ENCODE measurements at regions of chr1 and their contacts with region 1.

Region 1: GRCh38 chr1:86704458-86704971 is at the start of gene SH3GLB1:
- DNase-seq: peak; percentile 91 to 93 (median 92)
- H3K4me3 ChIP-seq: peak within 1 kb of the TSS; percentile 60 to 93
- H3K4me3 Mint-ChIP-seq: peak within 1 kb of the TSS; percentile 95 to 99 (median 98)
- H3K27ac ChIP-seq: peak within 1 kb of the TSS; percentile 94
- H3K27ac Mint-ChIP-seq: peak within 1 kb of the TSS; percentile 91 to 99 (median 98)
- H3K4me1 ChIP-seq: peaks cover 50% of the 10 kb centered on the region
- H3K4me1 Mint-ChIP-seq: peaks cover 32 to 66% (median 44%) of the 10 kb centered on the region in 4 donors
- H3K27me3 ChIP-seq: no peaks in the 10 kb centered on the region
- H3K27me3 Mint-ChIP-seq: peaks cover 0 to 3% of the 10 kb centered on the region in 2 donors
- total RNA-seq, gene SH3GLB1: 55.4 to 59.6 TPM

Region 2: DNA sequence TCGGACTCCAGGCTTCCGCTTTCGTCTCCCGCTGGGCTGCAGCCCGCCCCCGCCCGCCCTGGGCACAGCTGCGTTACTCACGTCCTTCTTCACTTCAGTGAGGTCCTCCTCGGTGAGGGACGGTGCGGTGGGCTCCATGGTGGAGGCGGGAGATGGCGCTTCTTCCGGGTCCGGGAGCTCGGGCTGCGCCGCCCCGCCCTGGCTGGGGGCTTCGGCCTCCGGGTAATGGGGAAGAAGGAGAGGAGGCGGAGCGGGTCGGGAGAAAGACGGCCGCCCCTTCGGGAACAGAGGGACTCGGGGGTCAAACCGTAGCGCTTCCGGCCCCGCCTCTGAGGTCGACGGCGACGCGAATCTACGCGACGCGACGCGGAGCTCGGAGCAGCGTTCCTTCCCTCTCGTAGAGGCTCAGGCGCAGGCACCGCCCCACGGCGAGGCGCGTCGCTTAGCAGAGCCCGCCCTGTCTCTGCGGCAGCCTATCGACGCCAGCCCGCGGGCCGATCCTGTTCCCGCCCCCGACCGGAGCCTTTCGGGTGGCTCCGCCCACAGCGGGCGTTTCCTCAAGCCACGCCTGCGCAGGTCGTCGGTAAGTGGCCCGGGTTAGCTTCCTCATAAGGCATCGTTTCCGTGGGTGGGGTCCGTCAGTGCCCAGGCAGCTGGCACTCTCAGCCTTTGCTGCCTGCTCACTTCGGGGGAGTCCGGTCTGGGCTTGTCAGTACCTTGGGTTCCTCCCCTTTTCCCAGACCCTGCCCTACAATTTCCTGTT is 1428.1 kb before region 1 on chr1 and contains the start of gene BCL10:
- CTCF ChIA-PET with region 1: no interaction called
- POLR2A ChIA-PET with region 1: no interaction called
- intact Hi-C with region 1: loop called (anchors 10 kb)
- DNase-seq: peak; percentile 96 to 98 (median 97)
- H3K4me3 ChIP-seq: peak within 1 kb of the TSS; percentile 75 to 94
- H3K4me3 Mint-ChIP-seq: peak within 1 kb of the TSS; percentile 88 to 93 (median 92)
- H3K27ac ChIP-seq: peak within 1 kb of the TSS; percentile 94
- H3K27ac Mint-ChIP-seq: peak within 1 kb of the TSS; percentile 94 to 97 (median 96)
- H3K4me1 ChIP-seq: peaks cover 55% of the 10 kb centered on the region
- H3K4me1 Mint-ChIP-seq: peaks cover 42 to 62% (median 53%) of the 10 kb centered on the region in 4 donors
- H3K27me3 ChIP-seq: no peaks in the 10 kb centered on the region
- H3K27me3 Mint-ChIP-seq: no peaks in the 10 kb centered on the region
- total RNA-seq, gene BCL10: 36.1 to 37.0 TPM

Region 3: GRCh38 chr1:86395771-86396497 is 308.6 kb before region 1 on chr1 and contains the start of gene ODF2L:
- CTCF ChIA-PET with region 1: interaction called, 13 read pairs
- POLR2A ChIA-PET with region 1: interaction called, 54 read pairs
- intact Hi-C with region 1: loop called (anchors 1 kb)
- DNase-seq: peak; percentile 90 to 94 (median 92)
- H3K4me3 ChIP-seq: peak within 1 kb of the TSS; percentile 77 to 87
- H3K4me3 Mint-ChIP-seq: peak within 1 kb of the TSS; percentile 94 to 99 (median 98)
- H3K27ac ChIP-seq: peak within 1 kb of the TSS; percentile 92
- H3K27ac Mint-ChIP-seq: peak within 1 kb of the TSS; percentile 97 to 100 (median 99)
- H3K4me1 ChIP-seq: peaks cover 56% of the 10 kb centered on the region
- H3K4me1 Mint-ChIP-seq: peaks cover 43 to 68% (median 51%) of the 10 kb centered on the region in 4 donors
- H3K27me3 ChIP-seq: no peaks in the 10 kb centered on the region
- H3K27me3 Mint-ChIP-seq: no peaks in the 10 kb centered on the region
- total RNA-seq, gene ODF2L: 97.3 to 98.3 TPM

Region 4: DNA sequence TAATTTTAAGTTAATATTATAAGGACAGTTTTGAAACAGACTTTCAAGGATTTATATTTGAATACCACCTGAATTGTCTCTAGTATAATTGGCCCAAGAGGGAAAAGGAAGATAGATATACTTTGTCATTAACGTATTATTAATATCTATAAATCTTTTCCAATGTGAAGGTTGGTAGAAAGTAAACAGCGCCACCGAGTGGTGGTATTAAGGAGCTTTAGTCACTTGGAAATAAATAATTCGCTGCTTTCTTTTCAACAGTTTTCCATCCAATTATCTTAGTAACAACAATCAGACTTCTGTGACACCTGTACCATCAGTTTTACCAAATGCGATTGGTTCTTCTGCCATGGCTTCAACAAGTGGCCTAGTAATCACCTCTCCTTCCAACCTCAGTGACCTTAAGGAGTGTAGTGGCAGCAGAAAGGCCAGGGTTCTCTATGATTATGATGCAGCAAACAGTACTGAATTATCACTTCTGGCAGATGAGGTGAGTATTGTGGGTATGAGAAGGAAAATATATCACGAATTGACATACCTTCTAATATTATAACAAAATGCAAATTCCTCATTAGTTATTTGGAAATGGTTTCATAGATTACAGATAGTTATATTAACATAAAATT is 37.5 kb after region 1 on chr1:
- CTCF ChIA-PET with region 1: interaction called, 31 read pairs
- POLR2A ChIA-PET with region 1: interaction called, 45 read pairs
- intact Hi-C with region 1: loop called (anchors 1 kb)
- DNase-seq: peak; percentile 11 to 55 (median 40)
- H3K4me3 ChIP-seq: no peak overlapping the region
- H3K4me3 Mint-ChIP-seq: no peak overlapping the region
- H3K27ac ChIP-seq: no peak overlapping the region
- H3K27ac Mint-ChIP-seq: no peak overlapping the region
- H3K4me1 ChIP-seq: peaks cover 24% of the 10 kb centered on the region
- H3K4me1 Mint-ChIP-seq: peaks cover 2 to 4% (median 4%) of the 10 kb centered on the region in 4 donors
- H3K27me3 ChIP-seq: no peaks in the 10 kb centered on the region
- H3K27me3 Mint-ChIP-seq: no peaks in the 10 kb centered on the region

Region 5: GRCh38 chr1:86833461-86834215 is 129.1 kb after region 1 on chr1:
- CTCF ChIA-PET with region 1: no interaction called
- POLR2A ChIA-PET with region 1: no interaction called
- intact Hi-C with region 1: loop called (anchors 1 kb)
- DNase-seq: peak; percentile 51 to 61 (median 58)
- H3K4me3 ChIP-seq: no peak overlapping the region
- H3K4me3 Mint-ChIP-seq: no peak overlapping the region
- H3K27ac ChIP-seq: no peak overlapping the region
- H3K27ac Mint-ChIP-seq: peak overlapping the region in 2 of 7 donors; percentile 4 to 35
- H3K4me1 ChIP-seq: peaks cover 5% of the 10 kb centered on the region
- H3K4me1 Mint-ChIP-seq: peaks cover 0 to 5% (median 2%) of the 10 kb centered on the region in 4 donors
- H3K27me3 ChIP-seq: no peaks in the 10 kb centered on the region
- H3K27me3 Mint-ChIP-seq: peaks cover 4 to 5% of the 10 kb centered on the region in 2 donors

Region 6: DNA sequence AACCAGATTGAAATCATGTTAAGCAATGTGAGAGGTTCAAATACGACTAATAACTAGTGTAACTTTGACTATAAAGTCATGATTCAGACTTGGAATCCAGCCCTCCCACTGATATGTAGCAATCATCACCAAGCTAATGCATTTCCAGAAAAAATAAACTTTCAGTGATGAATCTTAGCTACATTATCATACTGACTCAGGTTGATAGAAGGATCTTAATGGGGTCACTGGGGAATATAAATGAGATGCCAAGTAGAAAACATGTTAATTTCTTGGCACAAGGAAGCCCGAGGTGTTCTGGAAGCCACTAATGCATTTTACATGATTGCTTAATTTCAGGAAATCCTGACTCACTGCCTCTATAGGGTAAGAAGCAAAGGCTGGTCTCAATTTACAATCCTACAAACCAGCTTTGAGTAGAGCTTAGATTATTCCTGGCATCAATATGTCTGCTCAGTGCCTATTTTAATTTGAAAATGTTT is 141.7 kb after region 1 on chr1:
- CTCF ChIA-PET with region 1: no interaction called
- POLR2A ChIA-PET with region 1: no interaction called
- intact Hi-C with region 1: no loop called
- DNase-seq: no peak
- H3K4me3 ChIP-seq: no peak overlapping the region
- H3K4me3 Mint-ChIP-seq: no peak overlapping the region
- H3K27ac ChIP-seq: no peak overlapping the region
- H3K27ac Mint-ChIP-seq: no peak overlapping the region
- H3K4me1 ChIP-seq: no peaks in the 10 kb centered on the region
- H3K4me1 Mint-ChIP-seq: no peaks in the 10 kb centered on the region
- H3K27me3 ChIP-seq: no peaks in the 10 kb centered on the region
- H3K27me3 Mint-ChIP-seq: peaks cover 0 to 2% of the 10 kb centered on the region in 2 donors

Region 7: GRCh38 chr1:86866665-86867064 is 162.2 kb after region 1 on chr1:
- CTCF ChIA-PET with region 1: no interaction called
- POLR2A ChIA-PET with region 1: no interaction called
- intact Hi-C with region 1: no loop called
- DNase-seq: no peak
- H3K4me3 ChIP-seq: no peak overlapping the region
- H3K4me3 Mint-ChIP-seq: no peak overlapping the region
- H3K27ac ChIP-seq: no peak overlapping the region
- H3K27ac Mint-ChIP-seq: peak overlapping the region in 2 of 7 donors; percentile 21 to 82
- H3K4me1 ChIP-seq: no peaks in the 10 kb centered on the region
- H3K4me1 Mint-ChIP-seq: peaks cover 10 to 22% (median 17%) of the 10 kb centered on the region in 4 donors
- H3K27me3 ChIP-seq: no peaks in the 10 kb centered on the region
- H3K27me3 Mint-ChIP-seq: no peaks in the 10 kb centered on the region

Region 8: DNA sequence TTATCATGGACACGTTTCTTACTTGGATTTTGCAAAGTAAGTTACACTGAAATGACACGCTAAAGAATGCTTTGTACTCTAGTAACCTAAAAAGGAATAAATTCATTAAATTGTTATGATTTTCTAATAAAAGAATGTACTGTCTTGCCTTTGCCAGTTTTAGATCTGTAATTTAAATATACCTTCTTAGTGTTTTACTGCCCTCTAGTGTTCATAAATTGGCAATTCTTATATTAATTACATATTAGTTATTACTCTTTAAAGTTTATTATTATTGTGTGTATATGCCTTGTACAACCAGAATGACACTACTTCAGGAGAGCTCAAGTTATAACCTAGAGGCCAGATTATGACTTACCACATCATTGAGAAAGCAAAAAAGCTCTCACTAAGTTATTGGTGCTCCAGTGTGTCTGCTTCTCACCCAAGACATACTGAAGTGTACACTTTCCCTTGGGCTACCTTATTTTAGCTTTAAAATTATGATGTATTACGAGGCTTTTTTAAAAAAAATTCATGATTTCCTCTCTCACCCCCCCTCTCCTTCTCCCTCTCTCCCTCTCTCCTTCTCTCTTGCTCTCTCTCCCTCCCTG is 379.8 kb after region 1 on chr1:
- CTCF ChIA-PET with region 1: interaction called, 15 read pairs
- POLR2A ChIA-PET with region 1: no interaction called
- intact Hi-C with region 1: no loop called
- DNase-seq: peak in 4 of 5 donors; percentile 43 to 46 (median 44)
- H3K4me3 ChIP-seq: no peak overlapping the region
- H3K4me3 Mint-ChIP-seq: no peak overlapping the region
- H3K27ac ChIP-seq: no peak overlapping the region
- H3K27ac Mint-ChIP-seq: no peak overlapping the region
- H3K4me1 ChIP-seq: no peaks in the 10 kb centered on the region
- H3K4me1 Mint-ChIP-seq: peaks cover 0 to 3% (median 1%) of the 10 kb centered on the region in 4 donors
- H3K27me3 ChIP-seq: no peaks in the 10 kb centered on the region
- H3K27me3 Mint-ChIP-seq: no peaks in the 10 kb centered on the region

Region 9: GRCh38 chr1:87362834-87363426 is 658.4 kb after region 1 on chr1:
- CTCF ChIA-PET with region 1: no interaction called
- POLR2A ChIA-PET with region 1: no interaction called
- intact Hi-C with region 1: no loop called
- DNase-seq: no peak
- H3K4me3 ChIP-seq: no peak overlapping the region
- H3K4me3 Mint-ChIP-seq: no peak overlapping the region
- H3K27ac ChIP-seq: no peak overlapping the region
- H3K27ac Mint-ChIP-seq: no peak overlapping the region
- H3K4me1 ChIP-seq: no peaks in the 10 kb centered on the region
- H3K4me1 Mint-ChIP-seq: peaks cover 0 to 5% (median 0%) of the 10 kb centered on the region in 4 donors
- H3K27me3 ChIP-seq: no peaks in the 10 kb centered on the region
- H3K27me3 Mint-ChIP-seq: no peaks in the 10 kb centered on the region

Region 10: GRCh38 chr1:88683541-88684481 is 1979.3 kb after region 1 on chr1 and contains the start of gene PKN2:
- CTCF ChIA-PET with region 1: no interaction called
- POLR2A ChIA-PET with region 1: interaction called, 11 read pairs
- intact Hi-C with region 1: loop called (anchors 10 kb)
- DNase-seq: peak; percentile 97 to 98 (median 98)
- H3K4me3 ChIP-seq: peak within 1 kb of the TSS; percentile 43 to 82
- H3K4me3 Mint-ChIP-seq: peak within 1 kb of the TSS; percentile 95 to 99 (median 97)
- H3K27ac ChIP-seq: peak within 1 kb of the TSS; percentile 85
- H3K27ac Mint-ChIP-seq: peak within 1 kb of the TSS; percentile 96 to 99 (median 98)
- H3K4me1 ChIP-seq: peaks cover 39% of the 10 kb centered on the region
- H3K4me1 Mint-ChIP-seq: peaks cover 15 to 58% (median 24%) of the 10 kb centered on the region in 4 donors
- H3K27me3 ChIP-seq: no peaks in the 10 kb centered on the region
- H3K27me3 Mint-ChIP-seq: no peaks in the 10 kb centered on the region
- total RNA-seq, gene PKN2: 38.6 to 42.0 TPM

Measured in CD4-positive, alpha-beta memory T cell (primary cell).